Heart left ventricle (tissue), 16 donors: ENCODE measurements at regions of chr13 and their contacts with region 1.

Region 1: GRCh38 chr13:27353166-27353583 is 71.2 kb upstream of the GTF3A start:
- DNase-seq: no peak
- ATAC-seq: no peak
- H3K4me3 ChIP-seq: no peak overlapping the region
- H3K27ac ChIP-seq: peak overlapping the region in 1 of 12 donors; percentile 66
- H3K4me1 ChIP-seq: peaks cover 0 to 16% (median 0%) of the 10 kb centered on the region in 12 donors
- H3K27me3 ChIP-seq: peaks cover 0 to 7% (median 0%) of the 10 kb centered on the region in 9 donors
- CTCF ChIP-seq: no peak
- POLR2A ChIP-seq: no peak

Region 2: GRCh38 chr13:27289011-27289665 is 64.0 kb before region 1 on chr13:
- intact Hi-C with region 1: loop called in 2 of 10 experiments (anchors 5 to 10 kb)
- DNase-seq: no peak
- ATAC-seq: no peak
- H3K4me3 ChIP-seq: no peak overlapping the region
- H3K27ac ChIP-seq: no peak overlapping the region
- H3K4me1 ChIP-seq: no peaks in the 10 kb centered on the region
- H3K27me3 ChIP-seq: no peaks in the 10 kb centered on the region
- CTCF ChIP-seq: no peak
- POLR2A ChIP-seq: no peak

Region 3: DNA sequence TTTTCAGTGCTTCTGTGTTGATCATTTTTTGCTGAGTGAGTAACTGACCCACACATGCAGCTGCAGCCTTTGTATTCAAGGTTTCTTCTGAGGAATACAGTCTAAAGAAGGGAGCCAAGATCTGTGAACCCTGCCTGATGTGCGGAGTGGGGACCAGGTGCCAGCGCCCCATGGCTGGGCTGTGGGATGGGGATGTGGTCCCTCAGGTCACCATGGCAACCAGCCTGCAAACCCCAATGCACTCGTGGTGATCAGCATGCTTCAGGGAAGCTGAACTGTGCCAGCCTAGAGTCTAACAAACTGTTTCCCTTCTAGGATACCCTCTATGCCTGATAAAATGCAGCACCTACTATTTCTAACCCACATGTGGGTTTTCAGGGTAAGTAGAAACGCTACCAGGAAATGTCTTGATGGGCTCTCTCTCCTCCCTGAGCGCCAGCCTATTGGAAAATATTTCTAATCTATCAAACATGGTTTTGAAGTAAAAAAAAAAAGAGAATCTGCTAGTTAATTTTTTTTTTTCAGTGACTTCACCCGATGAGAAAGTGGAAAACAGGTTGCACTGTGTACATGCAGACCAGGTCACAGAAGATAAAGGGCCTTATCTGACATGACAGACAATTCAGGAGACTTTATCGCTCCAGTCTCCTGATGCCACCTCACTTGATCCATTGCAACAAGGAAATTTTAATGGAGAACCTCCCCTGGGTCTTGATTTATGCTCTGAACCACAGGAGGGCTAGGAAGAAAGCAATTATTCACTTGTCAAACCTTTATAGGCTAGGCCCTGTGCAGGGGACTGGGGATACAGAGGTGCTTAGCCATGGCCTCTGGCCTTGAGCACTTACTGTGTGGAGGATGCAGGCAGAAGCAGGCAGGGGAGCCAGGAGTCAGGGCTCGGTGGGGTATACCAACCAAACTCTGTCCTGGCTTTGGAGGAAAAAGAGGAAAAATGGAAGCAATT is 31.4 kb before region 1 on chr13:
- intact Hi-C with region 1: no loop called
- DNase-seq: no peak
- ATAC-seq: no peak
- H3K4me3 ChIP-seq: no peak overlapping the region
- H3K27ac ChIP-seq: no peak overlapping the region
- H3K4me1 ChIP-seq: no peaks in the 10 kb centered on the region
- H3K27me3 ChIP-seq: peaks cover 0 to 9% (median 0%) of the 10 kb centered on the region in 9 donors
- CTCF ChIP-seq: no peak
- POLR2A ChIP-seq: no peak

Region 4: GRCh38 chr13:27607125-27607524 is 253.9 kb after region 1 on chr13:
- intact Hi-C with region 1: no loop called
- DNase-seq: no peak
- ATAC-seq: peak; percentile 61 to 89 (median 74)
- H3K4me3 ChIP-seq: no peak overlapping the region
- H3K27ac ChIP-seq: peak overlapping the region; percentile 17 to 80 (median 47)
- H3K4me1 ChIP-seq: peaks cover 0 to 47% (median 23%) of the 10 kb centered on the region in 12 donors
- H3K27me3 ChIP-seq: no peaks in the 10 kb centered on the region
- CTCF ChIP-seq: no peak
- POLR2A ChIP-seq: no peak

Region 5: GRCh38 chr13:28611654-28612131 is 1258.5 kb after region 1 on chr13:
- intact Hi-C with region 1: no loop called
- DNase-seq: no peak
- ATAC-seq: peak in 3 of 4 donors; percentile 37 to 61 (median 46)
- H3K4me3 ChIP-seq: no peak overlapping the region
- H3K27ac ChIP-seq: peak overlapping the region in 1 of 12 donors; percentile 57
- H3K4me1 ChIP-seq: peaks cover 0 to 16% (median 0%) of the 10 kb centered on the region in 12 donors
- H3K27me3 ChIP-seq: no peaks in the 10 kb centered on the region
- CTCF ChIP-seq: no peak
- POLR2A ChIP-seq: no peak